ENCODE measurements at regions of chr7 and their contacts with region 1.

Region 1: DNA sequence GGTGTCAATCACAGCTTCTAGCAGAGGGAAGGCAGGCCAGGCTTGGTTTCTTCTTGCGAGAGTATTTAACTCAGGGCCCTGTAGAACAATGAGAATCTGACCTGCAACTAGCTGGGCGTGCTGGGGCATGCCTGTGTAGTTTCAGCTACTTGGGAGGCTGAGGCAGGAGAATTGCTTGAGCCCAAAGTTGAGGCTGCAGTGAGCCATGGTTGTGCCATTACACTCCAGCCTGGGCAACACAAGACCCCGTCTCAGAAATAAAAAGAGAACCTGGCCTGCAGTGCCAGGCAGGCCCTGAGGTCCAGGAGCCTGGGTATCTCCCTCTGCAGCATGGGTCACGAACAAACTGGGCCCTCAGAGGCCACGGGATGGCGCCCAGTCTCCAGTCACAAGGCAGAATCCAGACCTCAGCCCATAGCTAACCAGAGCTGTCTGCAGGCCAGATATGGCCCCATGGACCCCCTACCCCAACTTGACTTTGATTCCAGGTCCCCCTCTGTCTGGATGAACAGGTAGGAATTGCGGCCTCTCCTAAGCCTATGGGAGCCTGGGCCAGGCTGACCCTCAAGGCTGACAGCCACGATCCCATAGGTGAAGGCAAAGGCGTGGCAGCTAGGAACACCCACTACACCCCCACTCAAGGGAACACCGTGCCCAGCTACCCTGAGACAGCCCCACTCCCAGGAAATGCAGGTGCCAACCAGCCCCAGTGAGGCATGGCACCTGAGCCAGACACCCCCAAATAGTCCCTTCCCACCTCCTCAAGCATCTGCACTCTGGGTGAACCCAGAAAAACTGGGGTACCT is 102.7 kb upstream of the TNRC18 start:
- DNase-seq: peak; percentile 55
- ATAC-seq: no peak
- H3K4me3 Mint-ChIP-seq: peak overlapping the region; percentile 96
- H3K27ac Mint-ChIP-seq: peak overlapping the region; percentile 100
- H3K4me1 Mint-ChIP-seq: peaks cover 24% of the 10 kb centered on the region
- H3K27me3 Mint-ChIP-seq: peaks cover 1% of the 10 kb centered on the region

Region 2: GRCh38 chr7:5539013-5539411 is 12.7 kb after region 1 on chr7:
- CTCF ChIA-PET with region 1: no interaction called
- POLR2A ChIA-PET with region 1: interaction called, 17 read pairs
- DNase-seq: no peak
- ATAC-seq: peak; percentile 16
- H3K4me3 Mint-ChIP-seq: peak overlapping the region; percentile 10
- H3K27ac Mint-ChIP-seq: peak overlapping the region; percentile 57
- H3K4me1 Mint-ChIP-seq: peaks cover 20% of the 10 kb centered on the region
- H3K27me3 Mint-ChIP-seq: no peaks in the 10 kb centered on the region

Region 3: DNA sequence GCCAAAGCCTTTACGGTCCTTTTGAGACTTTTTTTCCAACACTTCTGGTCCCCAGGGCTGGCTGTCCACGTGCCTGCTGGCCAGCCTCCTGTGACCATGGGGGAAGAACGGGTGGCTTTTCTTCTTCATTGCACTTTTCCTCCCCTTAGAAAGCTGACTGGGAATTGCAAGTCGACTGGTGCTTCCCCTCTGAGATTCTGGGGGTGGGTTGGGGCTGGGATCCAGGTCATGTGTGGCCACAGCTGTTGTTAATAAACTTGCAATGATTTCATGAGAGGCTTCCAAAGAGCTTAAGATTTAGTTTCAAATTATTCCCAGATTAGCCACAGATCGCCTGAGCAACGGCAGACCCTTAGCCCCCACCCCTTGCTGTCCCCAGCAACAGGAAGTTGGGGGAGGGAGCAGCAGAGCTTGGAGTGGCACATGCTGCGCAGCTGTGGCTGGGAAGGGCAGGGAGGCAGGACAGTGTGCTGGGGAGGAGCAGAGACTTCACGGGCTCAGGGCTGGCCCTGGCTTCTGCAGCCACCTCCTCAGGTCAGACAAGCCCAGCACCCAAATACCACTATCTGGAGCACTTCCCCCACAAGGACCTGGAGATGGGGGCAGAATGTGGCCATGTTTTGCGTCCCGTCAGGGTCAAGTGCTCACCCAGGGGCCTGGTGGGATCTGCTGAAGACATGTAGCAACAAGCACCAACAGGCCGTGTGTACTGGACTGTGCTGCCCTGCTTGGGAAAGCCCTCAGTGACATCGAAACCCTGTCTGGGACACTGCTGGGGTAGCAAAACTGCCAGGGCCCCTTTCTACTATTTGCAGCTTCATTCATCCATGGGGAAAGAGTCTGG is 108.0 kb after region 1 on chr7:
- CTCF ChIA-PET with region 1: no interaction called
- POLR2A ChIA-PET with region 1: no interaction called
- DNase-seq: no peak
- ATAC-seq: no peak
- H3K4me3 Mint-ChIP-seq: no peak overlapping the region
- H3K27ac Mint-ChIP-seq: no peak overlapping the region
- H3K4me1 Mint-ChIP-seq: peaks cover 31% of the 10 kb centered on the region
- H3K27me3 Mint-ChIP-seq: no peaks in the 10 kb centered on the region

Region 4: DNA sequence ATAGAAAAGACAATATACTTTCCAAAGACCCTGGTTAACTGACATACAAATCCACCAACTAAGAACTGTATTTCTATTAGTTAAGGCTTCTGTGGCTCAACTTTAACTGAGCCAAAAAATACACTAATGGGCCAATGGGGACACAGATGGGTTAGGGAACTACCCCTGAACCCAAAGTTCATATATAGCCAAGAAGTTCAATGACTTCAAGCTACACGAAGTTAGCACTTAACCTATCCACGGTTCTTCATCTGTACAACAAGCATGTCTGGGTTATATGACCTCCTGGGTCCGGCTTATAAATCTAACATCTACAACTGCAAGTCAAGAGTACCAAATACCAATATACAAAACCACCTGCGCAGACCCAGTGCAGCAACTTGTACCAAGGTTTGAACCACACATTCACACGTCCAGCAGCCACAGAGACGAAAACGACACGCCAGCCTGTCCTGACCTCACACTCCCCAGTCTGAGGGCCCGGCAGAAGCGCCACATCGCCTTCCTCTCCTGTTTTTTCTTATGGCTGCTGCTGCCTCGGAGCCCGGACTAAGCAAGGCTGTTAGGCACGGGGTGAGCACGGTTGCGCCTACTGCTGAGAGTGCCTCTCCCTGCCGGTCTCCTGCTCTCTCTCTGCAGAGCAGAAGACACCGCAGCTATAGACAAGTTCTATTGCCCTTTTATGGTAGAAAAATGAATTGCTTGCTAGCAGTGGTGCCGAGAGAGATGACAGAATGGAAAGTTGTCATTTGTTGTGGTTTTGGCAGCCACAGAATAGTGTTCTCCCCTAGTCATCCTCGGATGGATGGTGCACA is 168.8 kb after region 1 on chr7:
- CTCF ChIA-PET with region 1: no interaction called
- POLR2A ChIA-PET with region 1: interaction called, 20 read pairs
- DNase-seq: peak; percentile 89
- ATAC-seq: peak; percentile 81
- H3K4me3 Mint-ChIP-seq: peak overlapping the region; percentile 73
- H3K27ac Mint-ChIP-seq: peak overlapping the region; percentile 89
- H3K4me1 Mint-ChIP-seq: peaks cover 94% of the 10 kb centered on the region
- H3K27me3 Mint-ChIP-seq: no peaks in the 10 kb centered on the region